Mammary epithelial cell (primary cell): ENCODE measurements at regions of chr3 and their contacts with region 1.

Region 1: GRCh38 chr3:174620138-174620537 is 239.0 kb upstream of the NAALADL2 start:
- DNase-seq: peak; percentile 9
- H3K4me3 ChIP-seq: no peak overlapping the region
- H3K27ac ChIP-seq: no peak overlapping the region
- H3K4me1 ChIP-seq: no peaks in the 10 kb centered on the region
- H3K27me3 ChIP-seq: no peaks in the 10 kb centered on the region
- CTCF ChIP-seq: peak; percentile 38 to 46

Region 2: DNA sequence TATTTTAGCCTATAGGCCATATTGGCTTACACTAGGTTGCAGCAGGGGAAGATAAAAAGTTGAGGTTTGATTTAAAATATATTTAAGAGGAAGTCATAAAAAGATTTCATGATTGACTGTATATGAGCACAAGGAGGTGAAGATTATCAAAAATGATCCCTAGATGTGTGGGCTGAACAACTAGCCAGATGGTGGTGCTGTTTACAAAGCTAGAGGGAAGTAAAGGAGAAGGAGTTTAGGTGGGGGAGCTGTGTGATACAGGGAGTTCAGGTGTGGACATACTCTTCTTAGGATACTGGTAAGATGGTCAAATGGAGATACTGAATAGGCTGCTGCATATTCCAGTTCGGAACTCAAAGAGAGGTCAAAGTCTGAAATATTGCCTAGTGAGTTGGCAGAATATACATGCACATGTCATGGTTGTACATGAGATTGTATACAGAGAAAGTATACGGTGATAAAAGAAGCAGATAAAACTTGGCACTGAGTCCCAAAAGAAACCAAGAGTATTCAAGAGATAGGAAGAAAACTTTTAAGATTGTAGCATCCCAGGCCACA is 494.8 kb before region 1 on chr3:
- CTCF ChIA-PET with region 1: no interaction called
- dilution Hi-C with region 1: no loop called
- in situ Hi-C with region 1: no loop called
- intact Hi-C with region 1: loop called (anchors 10 kb)
- DNase-seq: peak; percentile 12
- H3K4me3 ChIP-seq: no peak overlapping the region
- H3K27ac ChIP-seq: no peak overlapping the region
- H3K4me1 ChIP-seq: no peaks in the 10 kb centered on the region
- H3K27me3 ChIP-seq: no peaks in the 10 kb centered on the region
- CTCF ChIP-seq: peak; percentile 34 to 52

Region 3: GRCh38 chr3:174675406-174675805 is 55.3 kb after region 1 on chr3:
- CTCF ChIA-PET with region 1: no interaction called
- dilution Hi-C with region 1: no loop called
- in situ Hi-C with region 1: no loop called
- intact Hi-C with region 1: no loop called
- DNase-seq: no peak
- H3K4me3 ChIP-seq: no peak overlapping the region
- H3K27ac ChIP-seq: no peak overlapping the region
- H3K4me1 ChIP-seq: no peaks in the 10 kb centered on the region
- H3K27me3 ChIP-seq: no peaks in the 10 kb centered on the region
- CTCF ChIP-seq: no peak

Region 4: DNA sequence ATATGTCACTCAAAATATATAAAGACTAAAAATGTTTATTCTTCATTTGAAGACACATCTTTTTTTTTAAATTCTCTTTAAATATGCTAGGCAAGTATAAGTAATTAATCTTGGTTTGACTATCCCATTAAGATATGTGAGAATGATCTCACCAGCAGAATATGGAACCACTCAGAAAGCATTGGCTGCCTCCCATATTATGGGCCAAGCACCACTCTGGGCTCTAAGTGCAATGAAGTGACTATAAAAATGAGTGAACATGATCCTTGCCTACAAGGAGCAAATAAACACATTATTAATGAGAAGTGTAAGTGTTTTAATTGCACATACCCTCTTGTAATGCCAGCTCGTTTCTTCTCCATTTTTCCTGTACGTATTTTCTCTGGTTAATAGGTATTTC is 567.4 kb after region 1 on chr3:
- CTCF ChIA-PET with region 1: no interaction called
- dilution Hi-C with region 1: no loop called
- in situ Hi-C with region 1: no loop called
- intact Hi-C with region 1: no loop called
- DNase-seq: no peak
- H3K4me3 ChIP-seq: no peak overlapping the region
- H3K27ac ChIP-seq: no peak overlapping the region
- H3K4me1 ChIP-seq: peaks cover 4% of the 10 kb centered on the region
- H3K27me3 ChIP-seq: no peaks in the 10 kb centered on the region
- CTCF ChIP-seq: no peak